BJ (cell line): ENCODE measurements at regions of chr7 and their contacts with region 1.

Region 1: GRCh38 chr7:15305002-15305600 is 256.7 kb downstream of the AGMO start:
- DNase-seq: no peak
- H3K4me3 ChIP-seq: no peak overlapping the region
- H3K27me3 ChIP-seq: no peaks in the 10 kb centered on the region
- CTCF ChIP-seq: peak; percentile 82

Region 2: DNA sequence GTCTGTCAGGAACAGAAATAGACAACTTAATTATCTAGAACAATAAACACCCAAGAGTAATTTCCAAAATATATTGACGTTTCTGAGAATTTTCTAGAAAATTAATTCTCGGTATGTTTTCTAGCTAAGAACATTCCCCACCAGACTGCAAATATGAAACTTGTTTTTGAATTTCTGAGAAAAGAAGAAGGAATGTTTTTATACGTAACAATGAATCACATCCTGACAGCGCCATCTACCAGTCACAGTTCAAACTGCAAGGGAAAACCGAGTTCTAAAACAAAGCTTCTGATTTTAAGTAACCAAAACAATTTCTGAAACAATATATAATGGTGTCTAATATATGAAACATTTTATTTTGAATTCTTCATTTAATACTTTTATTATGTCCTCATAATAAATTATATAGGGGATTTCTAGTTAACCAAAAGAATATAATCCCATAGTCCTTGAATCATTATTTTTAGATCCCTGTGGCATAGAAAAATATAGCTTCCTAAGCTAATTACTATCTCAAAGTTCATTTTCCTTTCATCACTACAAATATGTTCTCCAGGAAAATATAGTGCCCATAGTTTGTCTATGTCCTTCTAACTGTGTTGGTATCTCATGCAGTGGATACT is 415.9 kb after region 1 on chr7:
- CTCF ChIA-PET with region 1: interaction called, 10 read pairs
- POLR2A ChIA-PET with region 1: no interaction called
- DNase-seq: no peak
- H3K4me3 ChIP-seq: no peak overlapping the region
- H3K27me3 ChIP-seq: no peaks in the 10 kb centered on the region
- CTCF ChIP-seq: peak; percentile 74